K562 (cell line): ENCODE measurements at regions of chrX and their contacts with region 1.

Region 1: GRCh38 chrX:103464774-103465117 is 54.5 kb downstream of the RAB40A start:
- DNase-seq: peak; percentile 43 to 78 (median 48)
- ATAC-seq: peak; percentile 96
- H3K4me3 ChIP-seq: no peak overlapping the region
- H3K27ac ChIP-seq: no peak overlapping the region
- H3K4me1 ChIP-seq: peaks cover 0 to 8% of the 10 kb centered on the region in 2 experiments; a peak in 2 of 5 replicates
- H3K27me3 ChIP-seq: no peaks in the 10 kb centered on the region
- CTCF ChIP-seq: peak; percentile 71 to 79 (median 76)
- EP300 ChIP-seq: no peak
- POLR2A ChIP-seq: no peak
- RAD21 ChIP-seq: peak; percentile 45 to 77

Region 2: DNA sequence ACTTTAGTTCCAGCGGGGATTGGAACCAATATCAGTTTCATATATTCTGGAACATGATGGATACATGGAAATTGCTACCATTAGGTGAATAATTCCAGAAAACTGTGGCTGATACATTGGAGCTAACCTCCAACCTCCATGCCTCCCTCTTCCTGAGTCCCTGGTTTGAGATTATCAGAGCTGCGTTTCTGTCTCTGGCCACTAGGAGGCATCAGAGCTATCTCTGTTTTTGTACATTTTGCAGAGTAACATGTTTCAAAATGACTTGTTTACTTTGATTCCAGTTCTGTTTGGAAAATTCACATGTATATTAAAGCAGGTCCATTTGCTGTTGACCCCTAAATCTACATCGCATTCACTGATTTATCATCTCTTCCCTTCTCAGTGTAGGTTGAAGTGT is 530.1 kb before region 1 on chrX:
- CTCF ChIA-PET with region 1: no interaction called
- POLR2A ChIA-PET with region 1: no interaction called
- in situ Hi-C with region 1: loop called (anchors 25 kb)
- intact Hi-C with region 1: no loop called
- DNase-seq: peak; percentile 18 to 46 (median 33)
- ATAC-seq: peak; percentile 69
- H3K4me3 ChIP-seq: no peak overlapping the region
- H3K27ac ChIP-seq: no peak overlapping the region
- H3K4me1 ChIP-seq: no peaks in the 10 kb centered on the region
- H3K27me3 ChIP-seq: no peaks in the 10 kb centered on the region
- CTCF ChIP-seq: peak; percentile 54 to 75 (median 62)
- EP300 ChIP-seq: no peak
- POLR2A ChIP-seq: no peak
- RAD21 ChIP-seq: peak in 1 of 2 experiments; percentile 38; a peak in 1 of 4 replicates

Region 3: DNA sequence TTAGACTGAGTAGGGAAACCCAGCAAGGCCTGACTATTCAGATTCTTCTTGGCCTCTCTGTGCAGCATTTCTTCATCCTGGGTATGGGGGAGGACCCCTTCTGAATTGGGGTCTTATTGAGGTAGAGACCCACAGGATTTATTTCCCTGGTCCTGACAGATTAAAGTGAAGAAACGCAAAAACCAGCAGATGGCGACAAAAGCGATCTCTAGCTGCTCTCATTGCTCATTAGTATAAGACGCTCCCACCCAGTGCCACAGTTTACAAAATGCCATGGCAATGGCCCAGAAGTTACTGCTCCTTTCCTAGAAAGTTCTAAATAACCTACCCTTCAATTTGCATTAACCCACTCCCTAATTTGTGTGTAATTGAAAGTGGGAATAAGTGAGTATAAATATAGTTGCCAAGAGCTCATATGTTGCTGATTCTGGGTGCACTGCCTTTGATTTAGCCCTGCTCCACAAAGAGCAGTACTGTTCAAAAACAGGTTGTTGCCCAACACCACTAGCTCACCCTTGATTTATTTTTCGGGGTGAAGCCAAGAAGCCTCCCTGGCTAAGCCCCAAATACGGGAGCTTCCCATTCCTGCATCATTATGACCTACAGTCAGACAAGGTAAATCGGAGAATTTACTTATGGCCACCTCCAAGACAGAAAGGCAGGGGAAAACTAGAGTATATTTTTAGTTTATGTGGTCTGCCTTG is 253.6 kb before region 1 on chrX:
- CTCF ChIA-PET with region 1: interaction called, 3 read pairs
- POLR2A ChIA-PET with region 1: no interaction called
- in situ Hi-C with region 1: no loop called
- intact Hi-C with region 1: loop called (anchors 1 kb)
- DNase-seq: peak in 2 of 4 experiments; percentile 39 to 81
- ATAC-seq: peak; percentile 52
- H3K4me3 ChIP-seq: no peak overlapping the region
- H3K27ac ChIP-seq: peak overlapping the region; percentile 12; the same call in 2 of the 3 replicates
- H3K4me1 ChIP-seq: peaks cover 11 to 21% of the 10 kb centered on the region in 2 experiments; a peak in 4 of 5 replicates
- H3K27me3 ChIP-seq: no peaks in the 10 kb centered on the region
- CTCF ChIP-seq: peak; percentile 60 to 73 (median 69)
- EP300 ChIP-seq: no peak
- POLR2A ChIP-seq: no peak
- RAD21 ChIP-seq: peak; percentile 71 to 86

Region 4: GRCh38 chrX:103248553-103248952 is 216.2 kb before region 1 on chrX:
- CTCF ChIA-PET with region 1: no interaction called
- POLR2A ChIA-PET with region 1: no interaction called
- in situ Hi-C with region 1: no loop called
- intact Hi-C with region 1: loop called (anchors 2 kb)
- DNase-seq: peak; percentile 33 to 63 (median 34)
- ATAC-seq: peak; percentile 66
- H3K4me3 ChIP-seq: no peak overlapping the region
- H3K27ac ChIP-seq: no peak overlapping the region
- H3K4me1 ChIP-seq: peaks cover 0 to 31% of the 10 kb centered on the region in 2 experiments; a peak in 3 of 5 replicates
- H3K27me3 ChIP-seq: no peaks in the 10 kb centered on the region
- CTCF ChIP-seq: peak; percentile 41 to 67 (median 49); a peak in 4 of 6 replicates
- EP300 ChIP-seq: no peak
- POLR2A ChIP-seq: no peak
- RAD21 ChIP-seq: peak; percentile 71 to 80

Region 5: DNA sequence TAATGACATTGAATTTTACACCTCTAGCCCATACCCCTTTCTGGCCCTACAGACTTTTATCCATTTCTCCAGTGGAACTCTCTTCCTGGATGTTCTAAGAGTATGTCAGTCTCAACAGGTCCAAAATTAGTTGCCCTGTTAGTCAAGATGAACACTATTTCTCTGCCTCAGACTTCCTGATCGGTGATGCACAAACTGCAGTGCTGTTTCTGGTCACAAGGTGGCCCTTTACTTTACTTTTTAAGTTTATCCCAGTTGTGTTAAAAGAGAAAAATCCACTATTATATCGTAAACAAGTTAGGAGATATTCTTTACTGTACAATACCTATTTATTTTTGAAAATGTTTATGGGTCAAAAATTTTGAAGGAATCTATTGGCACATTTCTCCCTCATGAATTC is 121.6 kb before region 1 on chrX:
- CTCF ChIA-PET with region 1: interaction called, 6 read pairs
- POLR2A ChIA-PET with region 1: no interaction called
- in situ Hi-C with region 1: no loop called
- intact Hi-C with region 1: loop called (anchors 1 kb)
- DNase-seq: peak; percentile 16 to 50 (median 20)
- ATAC-seq: peak; percentile 81
- H3K4me3 ChIP-seq: no peak overlapping the region
- H3K27ac ChIP-seq: no peak overlapping the region
- H3K4me1 ChIP-seq: no peaks in the 10 kb centered on the region; a peak in 1 of 5 replicates
- H3K27me3 ChIP-seq: no peaks in the 10 kb centered on the region
- CTCF ChIP-seq: peak; percentile 41 to 62 (median 58); a peak in 5 of 6 replicates
- EP300 ChIP-seq: no peak
- POLR2A ChIP-seq: no peak
- RAD21 ChIP-seq: peak; percentile 49 to 69

Region 6: GRCh38 chrX:103488794-103489193 is 24.0 kb after region 1 on chrX:
- CTCF ChIA-PET with region 1: no interaction called
- POLR2A ChIA-PET with region 1: no interaction called
- in situ Hi-C with region 1: no loop called
- intact Hi-C with region 1: loop called (anchors 1 kb)
- DNase-seq: no peak
- ATAC-seq: no peak
- H3K4me3 ChIP-seq: no peak overlapping the region
- H3K27ac ChIP-seq: no peak overlapping the region
- H3K4me1 ChIP-seq: no peaks in the 10 kb centered on the region
- H3K27me3 ChIP-seq: no peaks in the 10 kb centered on the region
- CTCF ChIP-seq: no peak
- EP300 ChIP-seq: no peak
- POLR2A ChIP-seq: no peak
- RAD21 ChIP-seq: no peak

Region 7: DNA sequence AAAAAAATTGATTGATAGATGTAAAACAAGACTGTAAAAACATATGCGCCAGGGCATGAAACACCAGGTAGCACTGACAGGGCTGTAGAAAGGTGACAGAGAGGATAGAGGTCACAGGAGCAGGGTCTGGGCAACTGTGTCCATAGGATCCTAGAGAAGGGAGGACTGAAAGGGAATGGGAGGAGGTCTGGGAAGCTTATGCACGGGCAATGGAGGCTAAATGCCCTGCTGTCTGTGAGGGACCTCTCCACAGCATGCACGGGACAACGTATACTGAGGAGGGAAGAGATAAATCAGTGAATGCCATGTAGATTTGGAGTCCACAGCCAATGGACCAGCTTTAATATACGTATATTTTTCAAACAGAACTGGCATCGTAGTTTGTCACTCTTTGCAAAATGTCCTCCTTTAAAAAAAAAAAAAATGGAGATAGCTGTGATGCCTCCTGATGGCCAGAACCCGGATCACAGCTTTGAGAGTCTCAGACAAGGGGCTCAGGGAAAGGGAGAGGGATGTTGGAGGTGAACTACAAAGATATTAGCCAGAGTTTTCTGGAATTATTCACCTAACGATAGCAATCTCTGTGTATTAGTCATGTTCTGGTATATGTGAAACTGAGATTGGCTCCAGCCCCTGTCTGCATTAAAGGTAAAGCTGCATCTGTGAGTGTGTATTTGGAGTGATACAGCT is 38.6 kb after region 1 on chrX:
- CTCF ChIA-PET with region 1: no interaction called
- POLR2A ChIA-PET with region 1: no interaction called
- in situ Hi-C with region 1: no loop called
- intact Hi-C with region 1: no loop called
- DNase-seq: no peak
- ATAC-seq: no peak
- H3K4me3 ChIP-seq: no peak overlapping the region
- H3K27ac ChIP-seq: no peak overlapping the region
- H3K4me1 ChIP-seq: no peaks in the 10 kb centered on the region
- H3K27me3 ChIP-seq: no peaks in the 10 kb centered on the region; a peak in 1 of 5 replicates
- CTCF ChIP-seq: no peak
- EP300 ChIP-seq: no peak
- POLR2A ChIP-seq: no peak
- RAD21 ChIP-seq: no peak

Region 8: DNA sequence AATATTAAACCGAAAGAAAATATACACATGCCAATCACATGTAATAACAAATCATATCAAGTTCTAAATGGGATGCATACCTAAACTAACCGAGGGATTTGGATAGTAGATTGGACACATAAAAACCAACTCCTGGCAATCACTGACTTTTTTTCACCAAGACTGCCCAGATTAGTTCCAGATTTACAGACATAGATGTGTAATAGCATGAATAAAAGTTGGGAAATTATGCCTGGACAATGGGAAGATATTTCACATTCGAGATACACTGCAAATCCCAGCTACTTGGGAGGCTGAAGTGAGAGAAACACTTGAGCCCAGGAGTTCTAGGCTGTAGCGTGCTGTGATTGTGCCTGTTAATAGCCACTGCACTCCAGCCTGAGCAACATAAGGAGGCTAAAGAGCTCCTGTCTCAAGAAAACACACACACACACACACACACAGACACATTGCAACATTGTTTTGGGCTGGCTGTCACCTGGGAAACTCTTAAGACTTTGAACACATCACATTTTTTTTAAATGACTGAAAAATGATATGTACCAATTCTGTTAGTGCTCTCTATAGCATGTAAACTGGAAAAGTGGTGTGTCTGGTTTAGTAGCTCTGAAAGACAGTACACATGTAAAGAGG is 48.8 kb after region 1 on chrX:
- CTCF ChIA-PET with region 1: no interaction called
- POLR2A ChIA-PET with region 1: no interaction called
- in situ Hi-C with region 1: no loop called
- intact Hi-C with region 1: no loop called
- DNase-seq: no peak
- ATAC-seq: no peak
- H3K4me3 ChIP-seq: no peak overlapping the region
- H3K27ac ChIP-seq: no peak overlapping the region
- H3K4me1 ChIP-seq: no peaks in the 10 kb centered on the region
- H3K27me3 ChIP-seq: no peaks in the 10 kb centered on the region
- CTCF ChIP-seq: no peak
- EP300 ChIP-seq: no peak
- POLR2A ChIP-seq: no peak
- RAD21 ChIP-seq: no peak

Region 9: DNA sequence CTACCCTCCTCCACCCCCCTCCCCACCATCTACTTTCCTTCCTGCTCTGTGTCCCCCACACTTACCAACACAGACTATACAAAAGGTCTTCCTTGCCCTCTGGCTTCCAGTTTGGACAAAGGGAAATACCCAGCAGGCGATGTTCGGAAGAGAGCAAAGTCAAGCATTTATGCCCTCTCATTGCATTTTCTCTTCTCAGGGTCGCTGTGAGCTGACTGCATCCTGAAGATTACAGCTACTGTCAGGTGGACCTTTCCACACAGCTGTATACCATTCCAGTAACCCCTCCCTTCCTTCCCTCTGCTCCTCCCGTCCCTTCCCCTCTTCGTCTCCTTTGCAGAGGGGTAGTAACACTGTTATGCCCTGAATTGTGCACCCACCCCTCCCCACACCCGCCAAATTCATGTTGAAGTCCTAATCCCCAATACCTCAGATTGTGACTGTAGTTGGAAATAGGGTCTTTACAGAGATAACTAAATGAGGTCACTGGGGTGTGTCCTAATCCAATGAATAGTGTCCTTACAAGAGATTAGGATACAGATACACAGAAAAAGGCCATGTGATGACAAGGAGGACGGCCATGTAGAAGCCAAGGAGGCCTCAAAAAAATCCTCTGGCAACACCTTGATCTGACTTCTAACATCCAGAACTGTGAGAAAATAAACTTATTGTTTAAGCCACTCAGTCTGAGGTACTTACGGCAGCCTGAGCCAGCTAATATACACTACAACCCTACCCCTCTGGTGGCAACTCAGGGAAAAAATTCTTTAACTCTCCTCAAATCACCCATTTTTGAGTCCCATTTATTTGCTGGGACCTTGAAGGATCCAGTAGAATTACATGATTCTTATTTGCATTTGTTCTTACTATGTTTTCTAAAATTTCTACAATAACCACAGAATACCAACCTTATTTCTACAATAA is 210.0 kb after region 1 on chrX:
- CTCF ChIA-PET with region 1: no interaction called
- POLR2A ChIA-PET with region 1: no interaction called
- in situ Hi-C with region 1: no loop called
- intact Hi-C with region 1: no loop called
- DNase-seq: peak in 1 of 4 experiments; percentile 10
- ATAC-seq: peak; percentile 75
- H3K4me3 ChIP-seq: no peak overlapping the region
- H3K27ac ChIP-seq: no peak overlapping the region
- H3K4me1 ChIP-seq: no peaks in the 10 kb centered on the region
- H3K27me3 ChIP-seq: no peaks in the 10 kb centered on the region
- CTCF ChIP-seq: no peak
- EP300 ChIP-seq: no peak
- POLR2A ChIP-seq: peak; percentile 66
- RAD21 ChIP-seq: no peak